HEK293 (cell line): ENCODE measurements at regions of chr18 and their contacts with region 1.

Region 1: GRCh38 chr18:21509062-21509461 is 91.4 kb downstream of the ESCO1 start:
- H3K4me3 ChIP-seq: no peak overlapping the region
- H3K27ac ChIP-seq: no peak overlapping the region
- H3K4me1 ChIP-seq: no peaks in the 10 kb centered on the region
- CTCF ChIP-seq: peak; percentile 50; the same call in 1 of the 2 replicates

Region 2: DNA sequence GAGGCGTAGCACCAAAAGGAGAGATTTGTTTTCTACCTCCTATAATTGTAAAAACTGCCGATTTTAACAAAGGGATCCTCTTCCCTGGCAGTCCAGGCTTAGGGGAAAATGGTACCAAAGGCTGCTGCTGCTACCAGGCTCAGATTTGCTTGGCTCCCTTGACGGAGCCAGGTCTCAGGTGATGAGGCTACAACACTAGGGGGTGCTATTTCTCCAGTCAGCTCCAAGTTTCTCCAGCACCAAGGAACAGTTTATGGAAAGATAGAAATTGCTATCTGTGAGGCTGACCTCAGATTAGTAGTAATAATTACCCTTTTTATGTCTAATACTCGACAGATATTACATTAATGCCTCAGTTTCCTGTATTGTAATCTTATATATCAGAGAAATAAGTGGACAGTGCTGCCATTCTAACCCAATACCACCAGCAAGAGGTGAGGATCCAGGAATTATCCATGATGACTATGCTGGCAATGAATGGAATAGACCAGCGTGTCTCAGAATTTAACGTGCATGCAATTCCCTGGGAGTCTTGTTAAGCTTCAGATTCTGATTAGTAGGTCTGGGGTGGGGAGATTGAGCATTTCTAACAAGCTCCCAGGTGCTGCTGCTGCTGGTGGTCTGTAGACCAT is 19.8 kb before region 1 on chr18:
- CTCF ChIA-PET with region 1: interaction called, 12 read pairs
- POLR2A ChIA-PET with region 1: no interaction called
- H3K4me3 ChIP-seq: no peak overlapping the region
- H3K27ac ChIP-seq: no peak overlapping the region
- H3K4me1 ChIP-seq: peaks cover 5% of the 10 kb centered on the region; the same call in 1 of the 2 replicates
- CTCF ChIP-seq: no peak